A673 (cell line): ENCODE measurements at regions of chr5 and their contacts with region 1.

Region 1: DNA sequence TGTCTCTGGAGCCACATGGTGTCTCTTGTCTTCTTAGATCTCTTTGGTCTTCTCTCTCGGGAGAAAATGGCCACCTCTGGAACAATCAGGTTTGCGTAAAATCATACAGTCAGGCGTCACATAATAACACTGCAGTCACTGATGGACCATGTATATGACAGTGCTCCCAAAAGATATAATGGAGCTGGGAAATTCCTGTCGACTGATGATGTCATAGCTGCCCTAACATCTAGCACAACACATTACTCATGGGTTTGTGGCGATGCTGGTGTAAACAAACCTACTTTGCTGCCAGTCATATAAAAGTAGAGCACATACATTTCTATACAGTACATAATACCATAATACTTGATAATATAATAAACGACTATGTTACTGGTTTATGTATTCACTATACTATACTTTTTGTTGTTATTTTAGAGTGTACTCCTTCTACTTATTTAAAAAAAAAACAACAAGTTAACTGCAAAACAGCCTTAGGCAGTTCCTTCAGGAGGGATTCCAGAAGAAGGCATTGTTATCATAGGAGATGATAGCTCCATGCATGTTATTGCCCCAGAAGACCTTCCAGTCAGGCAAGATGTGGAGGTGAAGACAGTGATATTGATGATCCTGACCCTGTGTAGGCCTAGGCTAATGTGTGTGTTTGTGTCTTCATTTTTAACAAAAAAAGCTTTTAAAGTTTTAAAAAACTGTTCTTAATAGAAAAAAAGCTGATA is 29.9 kb upstream of the RAI14 start:
- DNase-seq: no peak
- H3K4me3 ChIP-seq: no peak overlapping the region
- H3K27ac ChIP-seq: no peak overlapping the region
- H3K4me1 ChIP-seq: peaks cover 8% of the 10 kb centered on the region
- H3K27me3 ChIP-seq: no peaks in the 10 kb centered on the region
- CTCF ChIP-seq: no peak

Region 2: DNA sequence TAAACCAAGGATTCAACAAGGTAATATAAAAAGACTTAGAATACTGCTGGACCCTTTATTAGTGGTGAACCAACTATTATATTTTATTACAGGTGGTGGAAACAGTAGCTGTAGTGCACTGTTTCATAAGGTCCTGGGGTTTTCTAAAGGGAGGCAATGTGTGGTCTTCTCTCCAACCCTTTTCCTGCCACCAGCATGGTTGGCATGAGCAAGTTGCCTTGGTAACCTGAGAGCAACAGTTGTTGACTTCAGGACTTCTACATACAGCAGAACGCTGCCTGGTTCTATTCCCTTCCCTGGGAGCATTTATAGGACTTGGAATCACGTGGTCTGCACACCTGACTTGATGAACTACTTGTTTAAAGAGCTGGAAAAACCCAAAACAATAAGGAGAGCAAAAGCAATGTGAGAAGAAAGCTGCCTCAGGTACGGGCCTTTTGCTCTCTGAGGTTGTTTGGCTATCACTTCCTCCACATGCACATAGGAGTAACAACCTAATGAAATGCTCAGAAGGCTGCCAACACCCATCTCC is 51.2 kb before region 1 on chr5:
- CTCF ChIA-PET with region 1: no interaction called
- POLR2A ChIA-PET with region 1: no interaction called
- intact Hi-C with region 1: loop called (anchors 1 kb)
- DNase-seq: no peak
- H3K4me3 ChIP-seq: no peak overlapping the region
- H3K27ac ChIP-seq: no peak overlapping the region
- H3K4me1 ChIP-seq: peaks cover 18% of the 10 kb centered on the region
- H3K27me3 ChIP-seq: no peaks in the 10 kb centered on the region
- CTCF ChIP-seq: no peak

Region 3: DNA sequence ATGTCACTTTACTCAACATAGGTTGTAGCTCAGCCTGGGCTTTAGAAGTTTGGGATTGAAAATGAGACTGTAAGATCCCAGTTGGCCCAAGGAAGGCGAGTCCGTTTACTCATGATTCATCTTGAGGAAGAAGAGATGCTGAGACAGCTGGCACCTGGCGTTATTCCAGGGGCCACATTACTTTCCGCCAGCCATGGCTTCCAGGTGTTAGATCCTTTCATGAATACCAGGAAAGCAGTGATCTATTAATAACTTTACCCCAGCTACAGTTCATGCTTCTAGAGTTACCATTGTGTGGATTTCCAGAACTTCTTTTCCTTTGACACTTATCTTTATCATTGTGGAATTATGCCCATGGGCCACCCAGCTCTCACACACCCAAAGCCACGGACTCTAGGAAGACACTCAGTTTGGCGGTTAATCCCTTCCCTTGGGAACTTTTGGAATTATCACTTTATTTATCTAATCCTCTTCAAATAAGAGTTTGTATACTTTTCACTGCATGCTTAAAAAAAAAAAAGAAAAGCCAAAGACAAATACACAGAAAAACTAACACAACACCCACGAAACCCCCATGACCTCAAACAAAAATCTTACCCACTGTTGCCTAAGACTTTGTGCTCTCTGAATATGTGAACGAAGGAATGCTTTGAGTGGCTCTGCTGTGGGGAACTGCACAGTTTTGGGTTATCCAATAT is 56.9 kb after region 1 on chr5:
- CTCF ChIA-PET with region 1: no interaction called
- POLR2A ChIA-PET with region 1: no interaction called
- intact Hi-C with region 1: no loop called
- DNase-seq: no peak
- H3K4me3 ChIP-seq: no peak overlapping the region
- H3K27ac ChIP-seq: no peak overlapping the region
- H3K4me1 ChIP-seq: peaks cover 22% of the 10 kb centered on the region
- H3K27me3 ChIP-seq: no peaks in the 10 kb centered on the region
- CTCF ChIP-seq: no peak

Region 4: DNA sequence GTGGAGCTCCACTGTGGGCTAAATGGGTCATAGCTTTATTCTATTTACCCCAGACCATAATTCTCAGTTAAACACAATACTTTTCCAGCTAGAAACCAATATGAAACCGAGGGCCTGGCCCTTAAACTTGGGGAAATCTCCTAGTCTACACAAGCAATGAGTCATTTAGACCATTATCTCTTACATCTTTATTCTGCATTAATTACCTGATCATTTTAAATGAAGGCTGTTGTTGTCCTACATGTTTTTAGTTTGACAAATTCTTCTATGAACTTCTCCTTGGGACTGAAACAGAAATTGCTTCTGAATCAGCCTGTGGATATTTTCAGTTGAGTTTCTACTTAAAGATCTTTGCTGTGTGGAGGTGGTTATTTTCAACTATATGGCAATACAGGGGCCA is 67.8 kb after region 1 on chr5:
- CTCF ChIA-PET with region 1: no interaction called
- POLR2A ChIA-PET with region 1: interaction called, 15 read pairs
- intact Hi-C with region 1: no loop called
- DNase-seq: no peak
- H3K4me3 ChIP-seq: no peak overlapping the region
- H3K27ac ChIP-seq: no peak overlapping the region
- H3K4me1 ChIP-seq: no peaks in the 10 kb centered on the region
- H3K27me3 ChIP-seq: no peaks in the 10 kb centered on the region
- CTCF ChIP-seq: no peak